CD8-positive, alpha-beta T cell (primary cell): ENCODE measurements at regions of chr7 and their contacts with region 1.

Region 1: GRCh38 chr7:43721193-43721806 is 8.0 kb downstream of the COA1 start:
- DNase-seq: peak in 3 of 9 experiments; percentile 22 to 76 (median 69)
- ATAC-seq: peak; percentile 31
- H3K4me3 ChIP-seq: no peak overlapping the region
- H3K4me3 Mint-ChIP-seq: no peak overlapping the region
- H3K27ac ChIP-seq: no peak overlapping the region
- H3K27ac Mint-ChIP-seq: no peak overlapping the region
- H3K4me1 ChIP-seq: no peaks in the 10 kb centered on the region
- H3K4me1 Mint-ChIP-seq: peaks cover 54% of the 10 kb centered on the region
- H3K27me3 ChIP-seq: no peaks in the 10 kb centered on the region
- H3K27me3 Mint-ChIP-seq: no peaks in the 10 kb centered on the region
- CTCF ChIP-seq: peak; percentile 95

Region 2: DNA sequence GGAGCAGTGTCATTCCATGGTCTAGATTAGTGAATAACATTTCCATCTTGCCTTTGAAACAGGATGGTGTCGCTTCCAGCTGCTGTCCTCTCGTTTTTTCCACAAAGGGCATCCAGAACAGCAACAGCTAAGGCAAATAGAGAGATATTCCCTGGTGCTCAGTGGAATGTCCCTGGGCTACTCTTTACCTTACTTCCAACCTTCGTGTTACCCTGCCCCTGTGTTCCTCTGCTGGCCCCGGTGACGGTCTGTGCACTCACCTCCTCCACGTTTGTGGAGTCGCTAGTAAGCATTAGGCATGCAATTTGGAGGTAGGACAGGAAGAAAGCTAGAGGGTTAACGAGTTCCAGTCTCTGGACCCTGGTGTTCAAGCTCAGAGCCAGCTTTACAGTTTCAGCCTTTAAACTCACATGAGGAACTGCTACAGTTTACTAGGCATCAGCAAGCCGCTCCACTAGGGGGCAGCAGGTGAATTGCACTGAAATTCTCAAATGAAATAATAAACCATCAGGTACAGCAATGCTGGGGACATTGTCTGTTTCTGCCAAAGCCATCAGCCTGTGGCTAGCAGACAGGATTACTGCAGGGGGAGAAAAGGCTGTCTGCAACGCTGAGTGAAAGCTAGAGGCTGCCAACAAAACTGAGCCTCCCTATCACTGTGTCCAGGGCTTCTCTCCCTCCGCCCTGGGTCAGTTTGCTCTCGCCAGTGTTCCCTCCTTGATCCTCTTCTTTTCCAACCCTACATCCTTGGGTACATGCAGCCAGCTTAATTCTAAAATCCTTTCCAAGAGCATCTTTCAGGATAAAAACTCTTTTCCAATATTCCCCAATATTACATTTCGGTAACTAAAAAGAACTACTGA is 780.1 kb before region 1 on chr7:
- CTCF ChIA-PET with region 1: interaction called, 11 read pairs
- POLR2A ChIA-PET with region 1: no interaction called
- intact Hi-C with region 1: loop called (anchors 1 kb)
- DNase-seq: peak; percentile 53 to 80 (median 71)
- ATAC-seq: peak; percentile 80
- H3K4me3 ChIP-seq: no peak overlapping the region
- H3K4me3 Mint-ChIP-seq: no peak overlapping the region
- H3K27ac ChIP-seq: no peak overlapping the region
- H3K27ac Mint-ChIP-seq: no peak overlapping the region
- H3K4me1 ChIP-seq: no peaks in the 10 kb centered on the region
- H3K4me1 Mint-ChIP-seq: peaks cover under 1% of the 10 kb centered on the region
- H3K27me3 ChIP-seq: no peaks in the 10 kb centered on the region
- H3K27me3 Mint-ChIP-seq: no peaks in the 10 kb centered on the region
- CTCF ChIP-seq: peak; percentile 90